ENCODE measurements at regions of chr4 and their contacts with region 1.

Region 1: GRCh38 chr4:77376788-77377460 is 219.9 kb downstream of the CCNG2 start:
- DNase-seq: no peak
- ATAC-seq: no peak
- H3K4me3 ChIP-seq: no peak overlapping the region
- H3K27ac ChIP-seq: no peak overlapping the region
- H3K4me1 ChIP-seq: no peaks in the 10 kb centered on the region
- H3K27me3 ChIP-seq: peaks cover 0 to 2% of the 10 kb centered on the region in 2 experiments; a peak in 1 of 4 replicates
- CTCF ChIP-seq: no peak
- EP300 ChIP-seq: no peak
- POLR2A ChIP-seq: no peak
- RAD21 ChIP-seq: no peak

Region 2: DNA sequence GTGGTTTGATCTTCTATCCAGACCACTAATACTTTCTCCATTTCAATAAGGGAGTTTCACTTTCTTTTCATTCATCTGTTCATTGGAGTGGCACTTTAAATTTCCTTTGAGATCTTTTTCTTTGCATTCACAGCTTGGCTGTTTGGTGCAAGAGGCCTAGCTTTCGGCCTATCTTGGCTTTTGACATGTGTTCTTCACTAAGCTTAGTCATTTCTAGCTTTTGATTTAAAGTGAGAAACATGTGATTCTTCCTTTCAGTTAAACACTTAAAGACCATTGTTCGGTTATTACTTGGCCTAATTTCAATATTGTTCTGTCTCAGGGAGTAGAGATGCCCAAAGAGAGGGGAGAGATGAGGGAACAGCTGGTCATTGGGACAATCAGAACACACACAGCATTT is 253.0 kb after region 1 on chr4:
- CTCF ChIA-PET with region 1: no interaction called
- POLR2A ChIA-PET with region 1: no interaction called
- RAD21 ChIA-PET with region 1: no interaction called
- SMC1A ChIA-PET with region 1: no interaction called
- in situ Hi-C with region 1: loop called (anchors 10 kb)
- intact Hi-C with region 1: no loop called
- DNase-seq: no peak
- ATAC-seq: peak; percentile 78
- H3K4me3 ChIP-seq: no peak overlapping the region
- H3K27ac ChIP-seq: no peak overlapping the region
- H3K4me1 ChIP-seq: no peaks in the 10 kb centered on the region
- H3K27me3 ChIP-seq: no peaks in the 10 kb centered on the region
- CTCF ChIP-seq: no peak
- EP300 ChIP-seq: 0 out of 4 replicates have a peak, but pooled peaks of 1 of the 2 experiments have one; percentile 41
- POLR2A ChIP-seq: no peak
- RAD21 ChIP-seq: no peak